ENCODE measurements at regions of chr14 and their contacts with region 1.

Region 1: DNA sequence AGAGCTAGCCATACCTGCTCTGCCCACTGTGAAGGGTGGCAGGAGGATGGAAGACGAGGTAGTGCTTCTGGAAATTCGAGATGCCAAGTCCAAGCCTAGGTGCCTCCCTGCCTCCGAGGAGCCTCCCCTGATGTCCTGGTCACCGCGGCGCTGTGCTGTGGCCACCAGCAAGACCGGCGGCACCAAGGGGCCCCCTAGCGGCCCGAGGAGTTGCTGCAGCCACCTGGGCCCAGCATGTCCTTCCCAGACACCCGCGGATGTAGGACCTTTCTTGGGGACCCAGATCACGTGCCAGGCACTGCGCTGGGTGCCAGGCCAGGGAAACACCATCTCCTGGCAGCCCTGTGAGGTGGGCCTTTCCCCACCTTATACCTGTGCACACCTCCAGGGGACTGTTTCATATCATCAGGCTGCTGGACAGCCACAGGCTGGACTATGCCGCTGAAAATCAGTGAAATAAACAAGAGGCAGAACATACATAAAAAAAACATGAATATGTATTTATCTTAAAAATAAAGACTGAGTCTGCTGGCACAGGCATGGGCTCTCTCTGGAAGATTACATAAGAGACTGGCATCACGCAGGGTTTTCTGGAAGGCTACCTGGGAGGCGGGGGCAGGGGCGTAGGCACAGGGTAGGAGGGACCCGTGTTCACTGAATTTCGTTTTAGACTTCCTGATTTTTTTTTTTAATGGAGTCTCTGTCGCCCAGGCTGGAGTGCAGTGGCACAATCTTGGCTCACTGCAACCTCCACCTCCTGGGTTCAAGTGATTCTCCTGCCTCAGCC is 15.9 kb upstream of the HHIPL1 start:
- DNase-seq: peak; percentile 51 to 75
- ATAC-seq: peak; percentile 70 to 97 (median 95)
- H3K4me3 ChIP-seq: no peak overlapping the region
- H3K4me3 Mint-ChIP-seq: no peak overlapping the region
- H3K27ac ChIP-seq: no peak overlapping the region
- H3K27ac Mint-ChIP-seq: no peak overlapping the region
- H3K4me1 ChIP-seq: peaks cover 6% of the 10 kb centered on the region
- H3K4me1 Mint-ChIP-seq: peaks cover 0 to 5% of the 10 kb centered on the region in 2 donors
- H3K27me3 ChIP-seq: no peaks in the 10 kb centered on the region
- H3K27me3 Mint-ChIP-seq: peaks cover 0 to 10% of the 10 kb centered on the region in 2 donors
- CTCF ChIP-seq: peak; percentile 90

Region 2: DNA sequence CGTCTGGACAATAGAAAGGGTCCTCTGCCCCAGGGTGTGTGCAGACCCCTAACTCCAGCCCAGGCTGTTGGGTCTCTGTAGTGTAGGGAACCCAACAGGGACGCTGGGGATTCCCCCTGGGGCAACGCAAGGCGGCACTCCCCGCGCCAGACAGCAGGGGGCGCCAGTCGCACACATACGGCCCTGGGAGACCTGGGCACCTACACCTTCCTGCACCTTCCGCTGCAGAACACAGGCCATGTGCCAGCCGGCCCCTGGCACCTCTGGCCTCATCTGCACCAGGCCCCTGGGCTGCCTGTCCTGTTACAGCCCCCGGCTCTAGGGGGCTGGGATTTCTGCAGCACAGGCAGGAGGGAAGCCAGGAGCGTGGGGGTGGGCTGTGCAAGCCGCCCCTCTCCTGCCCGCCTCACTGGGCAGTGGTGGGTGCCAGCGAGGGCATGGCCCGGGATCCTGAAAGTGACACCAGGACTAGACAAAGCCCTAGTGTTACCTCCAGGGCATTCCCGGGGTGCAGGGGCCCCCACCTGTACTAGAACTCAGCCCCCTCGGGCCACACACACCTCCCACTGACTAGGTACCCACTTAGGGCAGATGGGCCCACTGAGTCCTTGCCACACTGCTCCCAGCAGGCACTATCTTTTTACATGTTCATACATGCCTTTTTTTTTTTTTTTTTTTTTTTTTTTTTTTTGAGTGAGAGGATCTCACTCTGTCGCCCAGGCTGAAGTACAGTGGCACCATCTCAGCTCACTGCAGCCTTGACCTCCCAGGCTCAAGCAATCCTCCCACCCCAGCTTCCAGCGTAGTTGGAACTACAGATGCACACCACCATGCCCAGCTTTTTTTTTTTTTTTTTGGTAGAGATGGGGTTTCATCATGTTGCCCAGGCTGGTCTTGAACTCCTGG is 110.3 kb before region 1 on chr14:
- intact Hi-C with region 1: loop called (anchors 1 kb)
- DNase-seq: peak; percentile 80 to 89
- ATAC-seq: peak; percentile 82 to 97 (median 85)
- H3K4me3 ChIP-seq: no peak overlapping the region
- H3K4me3 Mint-ChIP-seq: no peak overlapping the region
- H3K27ac ChIP-seq: no peak overlapping the region
- H3K27ac Mint-ChIP-seq: no peak overlapping the region
- H3K4me1 ChIP-seq: peaks cover 5% of the 10 kb centered on the region
- H3K4me1 Mint-ChIP-seq: no peaks in the 10 kb centered on the region
- H3K27me3 ChIP-seq: no peaks in the 10 kb centered on the region
- H3K27me3 Mint-ChIP-seq: no peaks in the 10 kb centered on the region
- CTCF ChIP-seq: peak; percentile 97